Posterior vena cava (tissue), 2 donors: ENCODE measurements at regions of chr10 and their contacts with region 1.

Region 1: DNA sequence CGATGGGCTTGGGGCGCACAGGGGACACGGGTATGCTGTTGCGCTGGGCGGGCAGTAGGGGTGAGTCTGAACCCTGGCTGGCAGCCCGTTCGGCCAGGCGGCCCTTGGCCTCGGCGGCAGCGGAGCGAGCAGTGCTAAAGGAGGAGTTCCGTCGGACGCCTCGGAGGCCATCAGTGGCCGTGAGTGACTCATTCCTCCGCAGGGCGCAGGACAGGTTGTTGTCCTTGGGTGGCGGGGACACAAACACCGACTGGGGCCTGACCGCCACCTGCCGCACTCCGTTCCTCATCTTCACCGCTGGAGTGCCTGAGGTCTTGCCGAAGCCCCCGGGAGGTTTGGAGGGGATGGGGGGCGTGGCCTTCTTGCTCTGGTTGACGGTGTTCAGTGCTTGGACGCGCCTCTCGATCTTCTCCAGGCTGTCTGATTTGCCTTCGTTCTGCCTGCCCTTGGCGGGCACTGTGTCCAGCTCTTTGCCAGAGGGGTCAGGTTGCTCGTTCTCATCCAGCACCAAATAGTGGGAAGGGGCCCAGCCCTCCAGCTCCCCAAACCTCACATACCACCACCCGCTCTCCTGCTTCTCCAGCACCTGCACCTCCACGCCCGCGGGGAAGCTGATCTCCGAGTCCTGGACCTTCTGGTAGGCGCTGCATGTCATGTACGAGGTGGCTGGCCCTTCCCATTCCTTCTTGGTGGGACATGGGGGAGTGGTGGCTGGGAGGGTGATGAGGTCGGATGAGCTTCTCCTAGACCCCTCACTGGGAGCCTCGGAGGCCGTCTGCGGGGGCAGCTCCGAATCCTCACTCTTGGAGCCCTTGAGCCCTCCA is 108.7 kb downstream of the NEURL1 start:
- DNase-seq: no peak

Region 2: GRCh38 chr10:103416436-103417147 is 185.6 kb before region 1 on chr10:
- intact Hi-C with region 1: no loop called
- DNase-seq: no peak

Region 3: GRCh38 chr10:103685880-103686669 is 83.8 kb after region 1 on chr10:
- intact Hi-C with region 1: loop called (anchors 5 kb)
- DNase-seq: peak; percentile 92

Region 4: DNA sequence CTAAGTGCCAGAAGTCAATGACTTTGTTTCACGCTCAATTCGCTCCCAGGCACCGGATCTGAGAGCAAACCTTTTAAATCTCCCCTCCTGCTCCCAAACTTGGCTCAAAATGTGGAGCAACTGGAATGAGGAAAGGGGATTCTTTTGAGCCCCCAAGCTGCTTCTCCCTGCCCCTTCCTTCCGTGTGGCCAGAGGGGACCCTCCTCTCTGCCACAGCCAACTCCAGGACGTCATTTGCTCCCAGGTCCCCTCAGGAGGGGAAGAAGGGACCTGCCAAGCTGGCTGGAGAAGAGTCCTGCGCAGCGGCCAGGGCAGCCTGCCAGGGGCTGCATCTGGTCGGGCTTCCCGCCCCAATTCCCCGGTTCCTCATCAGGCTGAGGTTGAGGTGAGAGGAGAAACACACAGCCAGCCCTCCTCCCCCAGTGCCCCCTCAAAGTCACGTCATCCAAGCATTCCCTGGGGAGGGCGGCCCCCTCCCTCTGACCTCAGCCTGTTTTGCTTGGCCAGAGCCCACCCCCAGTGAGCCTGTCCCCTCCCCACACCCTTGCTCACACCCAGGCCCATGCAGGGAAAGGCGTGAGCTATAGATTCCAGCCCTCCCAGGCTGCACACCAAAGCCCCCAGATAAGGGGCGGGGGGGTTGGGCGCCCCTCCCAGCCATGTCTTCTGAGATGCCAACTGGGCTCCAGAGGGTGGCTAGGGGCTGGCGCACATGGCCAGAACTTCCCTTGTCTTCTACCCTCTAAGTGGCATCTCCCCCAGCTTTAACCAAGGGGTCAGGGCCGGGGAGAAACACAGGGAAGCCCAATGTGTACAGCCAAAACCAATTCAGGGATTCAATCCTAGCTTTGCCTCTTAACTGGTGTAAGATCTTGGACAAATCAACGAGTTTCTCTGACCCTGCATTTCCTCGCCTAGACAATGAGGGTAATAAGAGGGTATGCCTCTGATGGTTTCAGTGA is 218.1 kb after region 1 on chr10:
- intact Hi-C with region 1: no loop called
- DNase-seq: peak; percentile 91